Testis (tissue), 5 donors: ENCODE measurements at regions of chr15 and their contacts with region 1.

Region 1: GRCh38 chr15:42736793-42737528 is at the start of gene CDAN1:
- DNase-seq: peak; percentile 93
- H3K4me3 ChIP-seq: peak within 1 kb of the TSS; percentile 80 to 87
- H3K27ac ChIP-seq: peak within 1 kb of the TSS; percentile 76 to 96
- H3K4me1 ChIP-seq: peaks cover 11% of the 10 kb centered on the region
- H3K27me3 ChIP-seq: no peaks in the 10 kb centered on the region
- CTCF ChIP-seq: no peak
- POLR2A ChIP-seq: peak; percentile 61
- total RNA-seq, gene CDAN1: 27.5 to 43.5 TPM

Region 2: GRCh38 chr15:42920519-42921227 is 183.7 kb after region 1 on chr15 and contains the start of gene TTBK2:
- intact Hi-C with region 1: loop called (anchors 10 kb)
- DNase-seq: peak; percentile 99
- H3K4me3 ChIP-seq: peak within 1 kb of the TSS; percentile 94 to 98
- H3K27ac ChIP-seq: peak within 1 kb of the TSS; percentile 91 to 93
- H3K4me1 ChIP-seq: peaks cover 9% of the 10 kb centered on the region
- H3K27me3 ChIP-seq: no peaks in the 10 kb centered on the region
- CTCF ChIP-seq: peak in 1 of 3 experiments; percentile 15
- POLR2A ChIP-seq: no peak
- total RNA-seq, gene TTBK2: 37.0 to 53.7 TPM